Right ventricle myocardium inferior (tissue), 1 donor: ENCODE measurements at regions of chr3 and their contacts with region 1.

Region 1: DNA sequence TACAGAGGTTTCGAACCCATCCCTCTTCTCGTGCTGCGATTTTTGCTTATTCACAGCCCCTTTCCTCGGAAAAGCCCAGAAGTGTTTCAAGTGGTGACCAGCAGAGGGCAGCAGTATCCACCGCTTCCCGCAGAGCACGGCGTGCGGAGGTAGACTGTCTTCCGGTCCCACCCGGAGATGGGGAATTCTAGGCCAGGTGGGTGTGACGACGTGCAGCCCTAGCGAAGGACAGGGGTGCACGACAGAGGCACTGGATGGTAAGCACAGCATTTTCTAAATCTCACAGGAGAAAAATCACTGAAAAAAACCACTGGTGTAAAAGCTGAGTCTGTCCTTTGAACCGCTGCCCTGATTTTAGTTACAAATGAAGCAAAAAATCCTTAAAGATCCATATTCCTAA is 7.4 kb upstream of the PSMD6 start:
- DNase-seq: peak; percentile 82
- ATAC-seq: peak; percentile 88

Region 2: DNA sequence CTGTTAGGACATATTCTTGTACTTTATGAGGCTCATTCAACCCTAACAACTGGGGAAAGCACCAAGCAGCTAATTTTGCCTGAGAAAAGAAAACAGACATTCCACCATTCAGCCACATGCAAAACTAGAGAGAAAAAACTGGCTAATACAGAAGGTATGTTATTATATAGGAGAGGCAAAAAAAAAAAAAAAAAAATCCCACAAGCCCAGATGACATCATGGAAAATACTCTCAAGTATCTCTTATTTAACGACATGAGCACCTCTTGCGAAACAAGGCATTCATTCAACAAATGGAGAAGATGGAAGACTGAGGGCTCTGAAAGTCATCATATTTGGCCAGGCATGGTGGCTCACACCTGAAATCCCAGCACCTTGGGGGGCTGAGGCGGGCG is 133.0 kb after region 1 on chr3:
- intact Hi-C with region 1: loop called (anchors 10 kb)
- DNase-seq: no peak
- ATAC-seq: no peak

Region 3: DNA sequence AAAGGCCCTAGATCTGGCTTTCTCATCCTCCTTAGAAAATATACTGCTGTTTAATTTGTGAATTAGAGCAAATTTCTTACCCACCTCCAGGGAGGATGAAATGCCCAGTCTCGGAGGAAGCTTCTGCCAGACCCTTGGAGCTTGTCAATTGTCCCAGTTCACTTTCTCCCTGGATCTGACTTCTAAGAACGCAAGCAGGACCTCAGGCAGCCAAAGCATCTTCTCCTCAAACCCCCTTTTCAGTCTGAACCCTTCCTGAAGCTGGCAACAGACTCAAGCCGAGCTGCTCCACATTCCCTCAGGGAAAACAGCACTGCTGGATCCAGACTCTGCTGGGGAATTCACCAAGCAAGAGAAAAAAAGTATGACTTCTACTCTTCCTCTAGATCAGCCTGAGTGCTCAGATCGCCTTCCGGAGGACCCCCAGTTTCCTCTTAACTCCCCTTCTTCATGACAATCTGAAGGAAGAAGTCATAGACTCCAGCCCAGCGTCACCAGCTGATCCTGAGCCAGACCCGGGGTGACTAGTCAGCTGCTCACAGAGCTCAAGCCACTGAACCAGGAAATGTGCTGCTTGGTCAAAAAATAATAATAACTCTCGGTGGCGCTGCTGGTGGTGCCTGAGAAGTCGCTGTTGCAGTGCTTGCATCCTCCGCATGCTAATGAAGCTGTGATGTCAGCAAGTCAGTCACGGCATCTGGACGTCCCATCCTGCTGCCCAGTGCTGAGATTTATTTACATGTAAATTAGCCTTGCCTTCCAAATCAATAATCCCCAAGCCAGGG is 194.3 kb after region 1 on chr3 and contains the start of gene PRICKLE2:
- intact Hi-C with region 1: loop called (anchors 5 kb)
- DNase-seq: peak; percentile 83
- ATAC-seq: peak; percentile 69
- total RNA-seq, gene PRICKLE2: 7.7 TPM

Region 4: DNA sequence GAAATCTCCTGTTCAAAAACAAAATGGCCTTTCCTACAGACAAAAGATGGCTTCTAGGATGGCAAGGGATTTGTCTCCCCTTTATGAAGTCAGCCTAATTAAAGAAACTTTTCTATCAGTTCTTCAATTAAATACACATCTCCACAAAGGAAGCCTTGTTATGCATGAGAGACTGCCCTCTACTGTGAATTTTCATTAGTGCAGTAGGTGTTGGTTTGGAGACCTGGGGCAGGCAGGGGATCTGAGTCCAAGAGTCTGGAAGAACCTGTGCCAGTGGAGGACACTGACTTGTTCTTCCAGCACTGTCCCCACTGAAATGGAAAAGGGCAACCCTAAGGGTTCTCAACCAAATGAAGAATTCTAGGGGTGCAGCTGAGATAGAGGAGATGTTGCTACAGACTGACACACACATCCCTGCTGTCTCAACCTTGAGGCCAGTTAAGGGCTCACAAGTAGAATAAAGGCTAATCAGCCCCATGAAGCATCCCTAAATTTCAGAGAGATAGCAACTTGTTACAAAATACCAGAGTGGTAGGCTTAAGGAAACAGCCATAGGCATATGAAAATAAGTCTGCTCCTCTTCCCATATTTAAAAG is 368.6 kb after region 1 on chr3:
- intact Hi-C with region 1: loop called (anchors 1 kb)
- DNase-seq: no peak
- ATAC-seq: peak; percentile 67

Region 5: DNA sequence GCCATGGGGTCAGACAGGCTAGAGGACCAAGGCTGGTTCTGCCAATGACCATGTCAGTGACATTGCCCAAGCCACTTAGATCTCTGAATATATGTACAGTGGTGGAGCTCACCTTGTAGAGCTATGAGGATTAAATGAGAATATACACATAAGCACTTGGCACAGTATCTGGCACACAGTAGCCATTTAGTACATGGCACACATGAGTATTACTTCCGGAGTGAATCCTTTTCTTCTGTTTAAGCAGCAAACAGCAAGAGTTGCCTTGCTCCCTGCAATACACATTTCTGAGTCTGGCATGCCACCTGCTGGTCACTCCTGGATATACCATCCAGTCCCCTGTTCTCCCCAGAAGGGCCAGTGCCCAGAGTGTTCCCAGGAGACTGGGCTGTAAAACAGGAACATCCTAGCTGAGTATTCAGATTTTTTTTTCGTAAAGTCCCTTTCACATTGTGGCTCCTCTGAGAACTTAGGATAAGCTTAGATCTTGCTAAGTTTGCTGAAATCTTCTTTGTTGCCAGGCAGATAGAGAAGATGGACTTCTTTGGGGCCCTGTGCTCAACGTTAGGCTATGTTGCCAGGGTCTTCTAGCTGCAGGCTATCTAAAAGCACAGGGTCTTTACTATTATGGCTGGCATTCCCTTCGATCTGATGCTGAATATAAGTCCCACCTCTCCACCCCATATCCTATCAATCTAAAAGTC is 453.7 kb after region 1 on chr3:
- intact Hi-C with region 1: loop called (anchors 2 kb)
- DNase-seq: no peak
- ATAC-seq: peak; percentile 94